Dorsolateral prefrontal cortex (tissue), 120 donors: ENCODE measurements at regions of chr20 and their contacts with region 1.

Region 1: GRCh38 chr20:60210779-60211617 is 252.8 kb downstream of the CDH26 start:
- DNase-seq: peak; percentile 58 to 85 (median 68)
- H3K4me3 ChIP-seq: no peak overlapping the region
- H3K27ac ChIP-seq: no peak overlapping the region
- H3K27me3 ChIP-seq: peaks cover 0 to under 1% (median 0%) of the 10 kb centered on the region in 45 donors
- CTCF ChIP-seq: peak; percentile 65 to 98 (median 93)

Region 2: DNA sequence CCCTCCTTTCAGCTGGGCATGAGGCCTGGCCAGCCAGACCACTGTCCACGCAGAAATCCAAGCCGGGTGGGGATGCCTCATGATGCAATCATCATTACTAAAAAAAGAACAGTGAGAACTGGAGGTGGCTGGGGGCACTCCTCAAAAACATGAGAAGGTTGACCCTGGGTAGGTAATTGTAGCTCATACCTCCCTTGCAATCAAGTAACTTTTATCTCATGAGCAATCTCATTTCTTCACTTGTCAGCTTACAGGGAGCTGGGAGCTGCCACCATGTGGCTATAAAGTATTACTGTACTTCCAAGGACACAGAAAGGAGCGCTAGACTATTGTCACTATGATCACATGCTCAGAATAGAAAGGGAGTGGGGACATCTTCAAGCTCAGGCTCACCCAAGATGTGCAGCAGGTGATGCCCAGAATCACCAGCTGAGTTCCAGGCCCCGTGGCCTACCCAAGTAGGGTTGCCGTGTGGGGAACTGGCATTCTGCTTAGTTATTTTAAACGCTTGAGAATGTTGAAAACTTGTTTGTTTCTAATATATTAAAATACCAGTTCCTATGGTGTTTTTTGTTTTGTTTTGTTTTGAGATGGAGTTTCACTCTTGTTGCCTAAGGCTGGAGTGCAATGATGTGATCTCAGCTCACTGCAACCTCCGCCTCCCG is 255.7 kb before region 1 on chr20:
- intact Hi-C with region 1: loop called in 1 of 2 experiments (anchors 10 kb)
- DNase-seq: no peak
- H3K4me3 ChIP-seq: no peak overlapping the region
- H3K27ac ChIP-seq: peak overlapping the region in 31 of 59 donors; percentile 2 to 68 (median 41)
- H3K27me3 ChIP-seq: no peaks in the 10 kb centered on the region
- CTCF ChIP-seq: peak in 55 of 56 donors; percentile 11 to 76 (median 55)

Region 3: DNA sequence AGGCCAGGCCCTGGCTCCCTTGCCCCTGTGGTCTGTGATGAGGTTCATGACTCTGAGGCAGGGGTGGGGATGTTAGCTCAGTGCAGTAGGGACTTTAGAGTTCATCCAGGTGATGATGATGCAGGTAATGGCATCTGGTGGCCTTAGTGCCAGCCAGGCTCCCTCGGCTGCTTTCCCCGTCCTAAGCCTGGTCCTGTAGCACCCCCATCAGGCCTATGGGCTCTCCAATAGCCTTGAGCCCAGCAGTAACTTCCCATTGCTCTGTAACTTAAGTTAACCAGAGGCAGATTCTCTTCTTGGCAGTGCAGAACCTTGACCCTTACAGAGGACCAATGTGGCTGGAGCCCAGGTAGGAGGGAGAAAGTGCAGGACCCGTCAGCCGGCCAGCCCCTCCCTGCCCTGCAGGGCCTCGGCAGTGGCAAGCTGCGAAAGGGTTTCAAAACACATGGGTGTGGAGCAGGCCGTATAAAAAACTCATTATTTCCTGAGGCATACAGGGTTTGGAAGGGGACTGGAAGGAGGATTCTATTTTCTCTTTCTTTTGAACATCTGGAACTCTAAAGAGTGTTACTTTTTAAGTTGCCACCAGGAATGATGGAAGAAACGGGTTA is 154.2 kb after region 1 on chr20:
- intact Hi-C with region 1: loop called (anchors 5 to 10 kb)
- DNase-seq: no peak
- H3K4me3 ChIP-seq: no peak overlapping the region
- H3K27ac ChIP-seq: no peak overlapping the region
- H3K27me3 ChIP-seq: no peaks in the 10 kb centered on the region
- CTCF ChIP-seq: peak in 34 of 56 donors; percentile 15 to 61 (median 28)

Region 4: GRCh38 chr20:61220160-61220559 is 1009.2 kb after region 1 on chr20:
- intact Hi-C with region 1: loop called in 1 of 2 experiments (anchors 5 kb)
- DNase-seq: no peak
- H3K4me3 ChIP-seq: no peak overlapping the region
- H3K27ac ChIP-seq: no peak overlapping the region
- H3K27me3 ChIP-seq: peaks cover 0 to 29% (median 4%) of the 10 kb centered on the region in 45 donors
- CTCF ChIP-seq: no peak

Region 5: GRCh38 chr20:61234803-61235113 is 1023.8 kb after region 1 on chr20:
- intact Hi-C with region 1: loop called (anchors 5 to 10 kb)
- DNase-seq: no peak
- H3K4me3 ChIP-seq: no peak overlapping the region
- H3K27ac ChIP-seq: no peak overlapping the region
- H3K27me3 ChIP-seq: peaks cover 0 to 21% (median 0%) of the 10 kb centered on the region in 45 donors
- CTCF ChIP-seq: no peak

Region 6: DNA sequence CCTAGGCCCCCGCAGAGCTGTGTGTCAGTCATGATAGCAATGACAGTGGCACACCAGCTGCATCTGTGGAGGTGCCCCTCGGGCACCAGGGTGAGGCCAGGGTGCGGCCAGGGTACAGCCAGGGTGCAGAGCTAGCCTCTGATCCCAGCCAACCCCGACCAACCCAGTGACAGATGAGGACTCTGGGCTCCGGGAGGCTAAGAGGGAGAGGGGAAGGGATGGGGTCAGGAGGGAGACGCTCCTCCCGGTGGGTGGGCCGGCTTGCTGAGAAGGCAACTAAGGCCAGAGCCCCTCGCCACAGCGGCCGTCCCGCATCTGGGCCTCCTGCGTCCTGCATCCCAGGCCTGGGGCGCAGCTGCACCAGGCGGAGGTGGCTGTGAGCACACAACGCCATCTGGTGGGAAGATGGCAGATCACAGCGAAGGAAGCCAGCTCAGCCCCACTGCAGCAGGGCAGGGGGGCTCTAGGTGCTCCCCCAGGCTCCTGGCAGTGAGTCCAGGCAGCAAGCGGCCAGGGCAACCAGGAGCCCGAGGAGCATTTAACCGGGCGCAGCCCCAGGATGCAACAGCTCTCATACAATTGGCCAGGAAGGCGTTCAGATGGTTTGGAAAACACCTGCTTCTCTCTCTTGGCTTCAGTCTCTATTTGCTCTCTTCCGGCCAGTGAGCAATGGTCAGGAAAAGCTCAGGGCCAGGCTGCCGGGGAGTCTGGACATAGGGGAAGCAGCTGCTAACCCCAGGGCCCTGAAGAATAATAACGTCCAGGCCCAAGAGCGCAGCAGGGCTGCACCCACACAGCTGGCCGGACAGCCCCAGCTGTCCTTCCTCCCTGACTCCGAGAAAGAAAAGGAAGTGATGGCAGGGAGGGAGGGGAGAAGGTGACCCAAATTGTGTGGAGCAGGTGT is 1685.3 kb after region 1 on chr20:
- intact Hi-C with region 1: loop called in 1 of 2 experiments (anchors 10 kb)
- DNase-seq: peak in 8 of 10 donors; percentile 25 to 76 (median 51)
- H3K4me3 ChIP-seq: no peak overlapping the region
- H3K27ac ChIP-seq: peak overlapping the region in 3 of 59 donors; percentile 16 to 38 (median 21)
- H3K27me3 ChIP-seq: peaks cover 0 to 7% (median 0%) of the 10 kb centered on the region in 45 donors
- CTCF ChIP-seq: peak; percentile 25 to 92 (median 83)